H1 (cell line): ENCODE measurements at regions of chr11 and their contacts with region 1.

Region 1: DNA sequence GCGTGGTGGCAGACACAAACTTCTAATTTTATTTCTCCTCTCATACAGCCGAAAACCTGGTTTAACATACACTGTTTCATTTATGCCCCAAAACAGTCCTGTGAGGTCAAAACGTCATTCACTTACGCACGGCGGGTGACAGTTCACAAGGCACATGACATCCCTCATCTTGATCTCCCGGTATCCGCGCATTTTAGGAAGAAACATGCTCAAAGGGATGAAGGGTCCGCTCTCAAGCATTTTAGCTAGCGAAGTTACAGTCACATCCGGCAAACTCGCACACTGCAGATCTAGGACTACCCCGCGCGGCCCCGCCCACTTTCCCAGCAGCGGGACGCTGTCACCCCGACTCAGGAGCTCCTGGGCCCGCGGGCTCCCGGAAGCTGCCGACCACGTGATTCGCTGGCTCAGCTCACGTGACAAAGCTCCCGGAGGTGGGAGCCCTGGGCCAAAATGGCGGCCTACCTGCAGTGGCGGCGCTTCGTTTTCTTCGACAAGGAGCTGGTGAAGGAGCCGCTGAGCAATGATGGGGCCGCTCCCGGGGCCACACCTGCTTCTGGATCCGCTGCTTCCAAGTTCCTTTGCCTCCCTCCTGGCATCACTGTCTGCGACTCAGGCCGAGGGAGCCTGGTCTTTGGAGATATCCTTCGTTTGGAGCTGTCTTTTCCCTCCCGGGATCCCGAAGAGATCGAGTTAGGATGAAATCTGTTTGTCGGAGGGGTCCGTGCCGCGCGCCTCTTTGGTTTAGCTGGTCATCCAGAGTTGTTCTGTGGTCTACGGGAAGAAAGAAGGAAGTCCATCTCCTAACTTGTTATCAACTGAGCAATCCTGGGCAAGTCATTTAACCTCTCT is at the start of gene VPS11:
- DNase-seq: peak; percentile 87 to 96
- H3K4me3 ChIP-seq: peak within 1 kb of the TSS; percentile 82 to 100 (median 98)
- H3K27ac ChIP-seq: peak within 1 kb of the TSS; percentile 82
- H3K4me1 ChIP-seq: no peaks in the 10 kb centered on the region; a peak in 1 of 7 replicates
- H3K27me3 ChIP-seq: no peaks in the 10 kb centered on the region
- CTCF ChIP-seq: no peak
- EP300 ChIP-seq: no peak
- POLR2A ChIP-seq: peak; percentile 43 to 91
- RAD21 ChIP-seq: no peak
- total RNA-seq, gene VPS11: 15.5 and 16.6 TPM in 2 replicates

Region 2: DNA sequence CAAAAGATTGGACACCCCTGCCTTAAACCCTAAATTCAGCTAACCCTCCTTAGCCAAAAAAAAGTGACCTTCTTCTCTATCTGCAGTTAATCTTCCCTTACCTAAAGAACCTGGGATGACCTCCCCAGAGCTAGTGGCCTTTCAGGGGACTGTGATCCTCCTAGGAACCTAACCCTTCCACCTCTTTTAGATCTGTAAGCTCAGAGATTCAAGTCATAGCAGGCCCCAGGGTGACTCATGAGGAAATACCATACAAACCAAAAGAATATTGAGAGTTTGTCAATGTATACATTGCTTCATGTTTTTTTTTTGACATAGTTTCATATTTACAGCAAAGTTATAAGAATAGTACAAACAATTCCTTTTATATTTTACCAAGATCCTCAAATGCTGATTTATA is 222.2 kb before region 1 on chr11:
- CTCF ChIA-PET with region 1: no interaction called
- POLR2A ChIA-PET with region 1: no interaction called
- DNase-seq: no peak
- H3K4me3 ChIP-seq: no peak overlapping the region
- H3K27ac ChIP-seq: no peak overlapping the region
- H3K4me1 ChIP-seq: peaks cover 0 to 2% (median 0%) of the 10 kb centered on the region in 4 experiments; a peak in 1 of 7 replicates
- H3K27me3 ChIP-seq: no peaks in the 10 kb centered on the region
- CTCF ChIP-seq: no peak
- EP300 ChIP-seq: no peak
- POLR2A ChIP-seq: no peak
- RAD21 ChIP-seq: no peak

Region 3: DNA sequence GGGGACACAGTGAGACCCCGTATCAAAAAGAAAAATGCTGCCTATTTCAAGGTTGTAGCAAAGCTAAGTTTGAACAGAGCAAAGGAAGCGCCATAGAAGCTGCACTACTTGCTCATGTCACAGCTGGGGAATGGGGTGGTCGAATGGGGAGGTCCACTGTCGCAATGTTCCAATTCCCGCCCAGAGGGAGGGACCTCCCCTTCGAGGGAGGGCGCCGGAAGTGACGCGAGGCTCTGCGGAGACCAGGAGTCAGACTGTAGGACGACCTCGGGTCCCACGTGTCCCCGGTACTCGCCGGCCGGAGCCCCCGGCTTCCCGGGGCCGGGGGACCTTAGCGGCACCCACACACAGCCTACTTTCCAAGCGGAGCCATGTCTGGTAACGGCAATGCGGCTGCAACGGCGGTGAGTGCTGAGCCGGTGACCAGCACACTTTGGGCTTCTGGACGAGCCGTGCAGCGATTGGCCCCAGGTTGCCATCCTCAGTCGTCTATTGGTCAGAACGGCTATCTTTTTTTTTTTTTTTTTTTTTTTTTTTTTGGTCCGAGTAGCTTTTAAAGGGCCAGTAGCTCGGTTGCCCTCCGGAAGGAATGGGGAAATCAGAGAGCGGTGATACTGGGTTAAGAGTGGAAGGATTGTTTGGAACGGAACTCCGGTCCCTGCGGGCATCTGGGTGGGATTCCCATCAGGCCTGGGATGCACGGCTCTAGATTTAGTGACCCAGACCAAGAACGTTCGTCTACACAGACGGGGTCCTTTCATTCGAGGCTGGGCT is 17.3 kb after region 1 on chr11 and contains the start of gene HMBS:
- CTCF ChIA-PET with region 1: interaction called, 3 read pairs
- POLR2A ChIA-PET with region 1: interaction called, 34 read pairs
- DNase-seq: peak; percentile 75 to 97
- H3K4me3 ChIP-seq: peak within 1 kb of the TSS; percentile 78 to 97 (median 86)
- H3K27ac ChIP-seq: peak within 1 kb of the TSS; percentile 98
- H3K4me1 ChIP-seq: peaks cover 0 to 5% (median 2%) of the 10 kb centered on the region in 4 experiments; a peak in 2 of 7 replicates
- H3K27me3 ChIP-seq: no peaks in the 10 kb centered on the region
- CTCF ChIP-seq: no peak
- EP300 ChIP-seq: no peak
- POLR2A ChIP-seq: peak; percentile 68 to 95
- RAD21 ChIP-seq: no peak; a peak in 1 of 4 replicates
- total RNA-seq, gene HMBS: 65.5 and 69.3 TPM in 2 replicates